ENCODE measurements at regions of chr7 and their contacts with region 1.

Region 1: GRCh38 chr7:70647801-70648498 is 484.0 kb upstream of the GALNT17 start:
- DNase-seq: peak; percentile 70
- H3K4me3 Mint-ChIP-seq: peak overlapping the region; percentile 21
- H3K27ac Mint-ChIP-seq: peak overlapping the region; percentile 60
- H3K4me1 Mint-ChIP-seq: peaks cover 18% of the 10 kb centered on the region
- H3K27me3 Mint-ChIP-seq: peaks cover 27% of the 10 kb centered on the region

Region 2: GRCh38 chr7:70492625-70493024 is 155.3 kb before region 1 on chr7:
- intact Hi-C with region 1: no loop called
- DNase-seq: no peak
- H3K4me3 Mint-ChIP-seq: no peak overlapping the region
- H3K27ac Mint-ChIP-seq: no peak overlapping the region
- H3K4me1 Mint-ChIP-seq: no peaks in the 10 kb centered on the region
- H3K27me3 Mint-ChIP-seq: no peaks in the 10 kb centered on the region

Region 3: DNA sequence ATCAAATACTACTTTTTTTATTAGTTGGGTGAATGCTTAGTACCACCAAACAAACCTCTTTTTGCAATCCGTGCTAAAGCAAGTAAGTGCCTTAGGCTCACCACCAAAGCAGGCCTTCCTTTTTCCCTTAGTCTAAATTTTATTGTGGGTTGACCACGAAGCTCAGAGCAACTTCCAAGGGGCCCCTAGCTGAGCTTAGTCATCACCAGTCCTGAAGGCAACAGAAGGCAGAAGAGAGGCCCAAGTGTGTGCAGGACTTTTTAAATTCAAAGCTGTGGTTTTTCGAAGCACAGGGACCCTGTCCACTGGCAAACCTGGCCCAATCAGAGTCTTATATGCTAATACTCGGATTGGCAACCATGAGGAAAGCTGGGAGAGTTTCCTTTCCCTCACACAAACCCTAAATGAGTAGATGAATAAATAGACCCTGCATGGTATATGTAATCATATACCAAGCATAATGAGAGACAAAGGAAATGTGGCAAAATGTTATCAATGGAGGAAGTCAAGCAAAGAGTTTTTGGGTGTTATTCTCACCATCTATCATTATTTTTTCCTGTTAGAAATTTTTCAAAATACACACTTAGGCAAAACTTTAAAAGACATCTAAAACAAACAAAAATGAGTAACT is 30.8 kb after region 1 on chr7:
- intact Hi-C with region 1: loop called (anchors 1 kb)
- DNase-seq: no peak
- H3K4me3 Mint-ChIP-seq: peak overlapping the region; percentile 10
- H3K27ac Mint-ChIP-seq: peak overlapping the region; percentile 18
- H3K4me1 Mint-ChIP-seq: peaks cover 20% of the 10 kb centered on the region
- H3K27me3 Mint-ChIP-seq: peaks cover 18% of the 10 kb centered on the region

Region 4: DNA sequence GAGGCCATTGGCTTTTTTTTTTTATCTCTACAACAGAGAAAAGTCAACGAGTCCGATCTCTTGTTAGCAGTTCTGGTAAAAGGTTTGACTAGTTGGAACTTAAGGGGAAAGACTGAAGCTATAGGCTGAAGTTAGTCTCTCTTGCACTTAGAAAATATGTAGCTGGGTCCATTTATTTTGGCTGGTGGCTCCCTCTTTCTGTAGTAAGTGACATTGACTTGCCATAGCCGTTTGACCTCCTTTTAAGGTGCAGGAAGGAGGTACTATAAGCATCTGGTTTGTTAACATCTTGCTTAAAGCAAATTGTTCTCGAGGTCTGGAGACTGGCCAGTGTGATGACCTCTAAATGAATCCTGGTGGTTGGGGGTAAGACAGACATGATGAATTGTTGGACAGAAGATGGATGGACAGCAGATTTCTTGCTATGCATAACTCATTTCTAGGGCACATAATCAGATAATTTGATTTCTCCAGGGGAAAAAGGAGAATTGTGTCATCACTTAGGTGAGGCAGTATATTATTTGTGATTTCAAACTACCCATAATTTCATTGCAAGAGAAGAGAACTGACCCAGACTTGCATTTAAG is 127.7 kb after region 1 on chr7:
- intact Hi-C with region 1: loop called (anchors 5 kb)
- DNase-seq: no peak
- H3K4me3 Mint-ChIP-seq: no peak overlapping the region
- H3K27ac Mint-ChIP-seq: no peak overlapping the region
- H3K4me1 Mint-ChIP-seq: peaks cover 34% of the 10 kb centered on the region
- H3K27me3 Mint-ChIP-seq: no peaks in the 10 kb centered on the region

Region 5: DNA sequence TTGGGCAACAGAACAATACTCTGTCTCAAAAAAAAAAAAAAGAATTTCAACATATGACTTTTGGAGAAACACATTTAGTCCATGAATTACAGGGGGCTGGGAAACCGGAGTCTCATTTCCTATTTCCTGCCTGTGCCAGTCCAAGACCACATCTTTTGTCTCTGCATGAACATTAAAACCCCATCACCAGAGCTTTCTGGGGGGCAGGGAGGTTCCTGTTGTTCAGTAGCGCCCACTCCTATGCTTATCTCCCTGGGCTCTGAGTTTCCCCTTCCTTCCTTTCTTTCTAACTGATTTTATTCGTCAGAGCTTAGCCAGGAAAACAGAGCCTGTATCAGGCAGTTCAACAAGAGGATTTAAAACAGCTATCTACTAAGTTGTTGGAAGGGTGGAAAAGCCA is 1644.8 kb after region 1 on chr7:
- intact Hi-C with region 1: no loop called
- DNase-seq: no peak
- H3K4me3 Mint-ChIP-seq: no peak overlapping the region
- H3K27ac Mint-ChIP-seq: no peak overlapping the region
- H3K4me1 Mint-ChIP-seq: no peaks in the 10 kb centered on the region
- H3K27me3 Mint-ChIP-seq: no peaks in the 10 kb centered on the region